Transverse colon (tissue), 4 donors: ENCODE measurements at regions of chr6 and their contacts with region 1.

Region 1: DNA sequence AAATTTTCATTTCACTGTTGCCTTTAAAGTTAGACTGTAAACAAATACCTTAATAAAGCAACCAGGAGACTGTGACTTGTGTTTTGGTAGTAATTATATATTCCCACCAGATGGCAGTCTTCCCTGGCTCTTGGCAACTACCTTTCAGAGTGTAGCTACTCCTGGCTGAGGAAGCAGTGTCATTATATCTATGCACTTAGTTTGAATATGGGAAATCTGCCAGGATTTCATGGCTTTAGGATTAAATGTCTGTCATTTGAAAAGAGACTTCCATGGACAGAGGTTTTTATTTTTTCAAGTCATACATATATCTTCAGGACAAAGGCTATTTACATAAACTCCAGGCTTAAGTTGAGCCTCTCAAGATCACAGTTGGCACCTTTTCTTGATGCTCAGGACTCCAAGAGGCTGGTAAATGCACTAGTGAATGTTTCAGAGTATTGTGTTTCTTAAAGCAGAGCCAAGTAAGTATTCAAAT is 160.1 kb downstream of the C6orf58 start:
- DNase-seq: peak; percentile 10
- H3K4me3 ChIP-seq: no peak overlapping the region
- H3K27ac ChIP-seq: no peak overlapping the region
- H3K4me1 ChIP-seq: peaks cover 0 to 8% (median 0%) of the 10 kb centered on the region in 4 donors
- H3K27me3 ChIP-seq: no peaks in the 10 kb centered on the region
- CTCF ChIP-seq: peak; percentile 57 to 64 (median 63)
- EP300 ChIP-seq: no peak
- POLR2A ChIP-seq: no peak

Region 2: GRCh38 chr6:128327890-128328289 is 590.8 kb after region 1 on chr6:
- in situ Hi-C with region 1: loop called in 3 of 4 experiments (anchors 10 to 25 kb)
- intact Hi-C with region 1: no loop called
- DNase-seq: peak; percentile 12
- H3K4me3 ChIP-seq: no peak overlapping the region
- H3K27ac ChIP-seq: no peak overlapping the region
- H3K4me1 ChIP-seq: peaks cover 0 to under 1% (median 0%) of the 10 kb centered on the region in 4 donors
- H3K27me3 ChIP-seq: no peaks in the 10 kb centered on the region
- CTCF ChIP-seq: peak; percentile 13 to 39 (median 32)
- EP300 ChIP-seq: no peak
- POLR2A ChIP-seq: no peak

Region 3: GRCh38 chr6:128569737-128570679 is 833.0 kb after region 1 on chr6:
- in situ Hi-C with region 1: loop called in 1 of 4 experiments (anchors 25 kb)
- intact Hi-C with region 1: no loop called
- DNase-seq: no peak
- H3K4me3 ChIP-seq: no peak overlapping the region
- H3K27ac ChIP-seq: no peak overlapping the region
- H3K4me1 ChIP-seq: peaks cover 0 to 18% (median 9%) of the 10 kb centered on the region in 4 donors
- H3K27me3 ChIP-seq: no peaks in the 10 kb centered on the region
- CTCF ChIP-seq: no peak
- EP300 ChIP-seq: no peak
- POLR2A ChIP-seq: no peak

Region 4: GRCh38 chr6:128731249-128732165 is 994.5 kb after region 1 on chr6:
- in situ Hi-C with region 1: loop called in 3 of 4 experiments (anchors 10 to 25 kb)
- intact Hi-C with region 1: no loop called
- DNase-seq: no peak
- H3K4me3 ChIP-seq: no peak overlapping the region
- H3K27ac ChIP-seq: no peak overlapping the region
- H3K4me1 ChIP-seq: no peaks in the 10 kb centered on the region
- H3K27me3 ChIP-seq: no peaks in the 10 kb centered on the region
- CTCF ChIP-seq: peak; percentile 19 to 48 (median 34)
- EP300 ChIP-seq: no peak
- POLR2A ChIP-seq: no peak

Region 5: DNA sequence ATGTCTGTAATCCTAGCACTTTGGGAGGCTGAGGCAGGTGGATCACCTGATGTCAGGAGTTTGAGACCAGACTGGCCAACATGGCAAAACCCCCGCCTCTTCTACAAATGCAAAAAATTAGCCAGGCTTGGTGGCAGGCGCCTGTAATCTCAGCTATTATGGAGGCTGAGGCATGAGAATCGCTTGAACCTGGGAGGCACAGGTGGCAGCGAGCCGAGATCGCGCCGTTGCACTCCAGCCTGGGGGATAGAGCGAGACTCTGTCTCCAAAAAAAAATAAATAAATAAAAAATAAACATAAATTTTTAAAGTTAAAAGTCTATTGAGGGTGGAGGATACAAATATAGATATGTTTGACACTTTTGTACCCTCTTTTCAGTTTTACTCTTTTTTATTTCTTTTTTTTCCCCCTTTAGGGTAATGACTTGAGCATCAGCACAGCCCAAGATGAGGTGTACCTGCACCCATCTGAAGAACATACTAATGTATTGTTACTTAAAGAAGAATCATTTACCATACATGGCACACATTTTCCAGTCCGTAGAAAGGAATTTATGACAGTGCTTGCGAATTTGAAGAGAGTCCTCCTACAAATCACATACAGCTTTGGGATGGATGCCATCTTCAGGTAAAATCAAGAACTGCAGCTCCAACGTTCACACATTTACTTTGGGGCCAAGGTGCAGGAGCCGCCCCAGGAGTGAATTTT is 1514.8 kb after region 1 on chr6:
- in situ Hi-C with region 1: no loop called
- intact Hi-C with region 1: loop called (anchors 10 kb)
- DNase-seq: peak; percentile 80
- H3K4me3 ChIP-seq: no peak overlapping the region
- H3K27ac ChIP-seq: peak overlapping the region in 2 of 4 donors; percentile 43 to 46
- H3K4me1 ChIP-seq: peaks cover 0 to 30% (median 14%) of the 10 kb centered on the region in 4 donors
- H3K27me3 ChIP-seq: no peaks in the 10 kb centered on the region
- CTCF ChIP-seq: peak; percentile 75 to 86 (median 81)
- EP300 ChIP-seq: no peak
- POLR2A ChIP-seq: no peak